B cell (primary cell): ENCODE measurements at regions of chr3 and their contacts with region 1.

Region 1: DNA sequence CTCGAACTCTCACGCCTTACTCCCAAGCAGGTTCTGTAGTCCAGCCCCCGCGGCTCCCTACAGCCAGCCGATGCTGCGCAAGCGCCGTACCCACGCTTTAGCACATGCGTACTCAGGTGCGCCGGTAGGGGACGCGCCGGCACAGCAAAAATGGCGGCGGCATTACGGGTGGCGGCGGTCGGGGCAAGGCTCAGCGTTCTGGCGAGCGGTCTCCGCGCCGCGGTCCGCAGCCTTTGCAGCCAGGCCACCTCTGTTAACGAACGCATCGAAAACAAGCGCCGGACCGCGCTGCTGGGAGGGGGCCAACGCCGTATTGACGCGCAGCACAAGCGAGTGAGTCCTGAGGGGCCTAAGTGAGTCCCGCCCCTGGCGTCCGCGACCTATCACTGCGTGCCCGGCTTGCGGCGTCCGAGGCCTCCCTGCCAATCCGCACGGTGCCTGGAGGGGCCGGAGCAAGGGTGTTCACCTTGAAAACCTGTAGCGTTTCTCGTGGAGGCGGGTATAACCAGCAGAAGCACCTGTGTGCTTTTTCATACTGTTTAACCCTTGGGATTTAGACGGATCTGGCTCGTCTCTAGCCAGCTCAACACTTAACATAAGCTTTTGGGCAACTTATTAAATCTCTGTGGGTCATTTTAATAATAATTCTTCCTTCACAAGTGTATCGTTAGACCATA is at the start of gene PCCB:
- DNase-seq: peak; percentile 98
- ATAC-seq: peak; percentile 96
- H3K4me3 ChIP-seq: peak within 1 kb of the TSS; percentile 59 to 76 (median 73)
- H3K4me3 Mint-ChIP-seq: peak within 1 kb of the TSS; percentile 92
- H3K27ac ChIP-seq: peak within 1 kb of the TSS; percentile 72 to 83
- H3K27ac Mint-ChIP-seq: peak within 1 kb of the TSS; percentile 92
- H3K4me1 ChIP-seq: peaks cover 10 to 17% of the 10 kb centered on the region in 2 donors
- H3K4me1 Mint-ChIP-seq: peaks cover 20% of the 10 kb centered on the region
- H3K27me3 ChIP-seq: no peaks in the 10 kb centered on the region
- H3K27me3 Mint-ChIP-seq: no peaks in the 10 kb centered on the region
- CTCF ChIP-seq: peak; percentile 82
- total RNA-seq, gene PCCB: 12.5 and 15.5 TPM in 2 replicates

Region 2: DNA sequence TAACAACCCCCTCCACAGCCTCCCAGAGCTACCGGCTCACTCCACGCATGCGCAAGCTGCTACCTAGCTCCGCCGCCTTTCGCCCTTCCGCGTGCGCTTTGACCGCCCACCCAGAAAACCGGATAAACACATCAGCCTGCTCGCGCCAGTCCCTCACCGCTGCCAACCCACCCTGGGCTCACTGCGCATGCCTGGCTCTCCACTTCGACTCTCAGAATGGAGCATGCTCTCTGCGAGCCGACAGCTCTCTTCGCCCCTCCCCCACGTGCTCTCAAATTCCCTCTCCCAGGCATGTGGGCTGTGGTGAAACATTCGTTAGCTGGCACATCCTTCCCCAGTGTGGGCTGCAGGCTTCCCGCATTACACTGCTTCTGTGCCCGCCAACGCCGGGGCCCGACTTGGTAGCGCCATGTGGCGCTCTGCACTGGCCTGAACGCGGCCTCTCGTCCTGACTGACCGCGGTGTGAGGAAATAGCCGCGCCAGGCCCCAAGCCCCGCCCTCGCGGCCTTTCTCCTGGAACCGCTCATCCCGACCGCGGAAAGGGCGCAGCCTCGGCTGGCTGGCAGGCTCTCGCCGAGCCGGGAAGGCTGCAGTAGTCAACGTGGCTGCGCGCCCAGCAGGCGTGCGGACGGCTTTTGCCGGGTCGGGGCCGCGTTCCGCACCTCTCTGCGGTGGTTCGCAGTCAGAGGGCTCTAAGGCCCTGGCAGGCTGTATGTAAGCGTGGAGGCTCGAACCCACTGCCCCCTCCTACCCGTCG is 53.8 kb before region 1 on chr3:
- CTCF ChIA-PET with region 1: interaction called, 43 read pairs
- POLR2A ChIA-PET with region 1: interaction called, 16 read pairs
- intact Hi-C with region 1: loop called (anchors 1 kb)
- DNase-seq: peak; percentile 99
- ATAC-seq: peak; percentile 68
- H3K4me3 ChIP-seq: peak overlapping the region; percentile 65 to 95 (median 86)
- H3K4me3 Mint-ChIP-seq: peak overlapping the region; percentile 97
- H3K27ac ChIP-seq: peak overlapping the region; percentile 91 to 99
- H3K27ac Mint-ChIP-seq: peak overlapping the region; percentile 100
- H3K4me1 ChIP-seq: peaks cover 34 to 36% of the 10 kb centered on the region in 2 donors
- H3K4me1 Mint-ChIP-seq: peaks cover 36% of the 10 kb centered on the region
- H3K27me3 ChIP-seq: no peaks in the 10 kb centered on the region
- H3K27me3 Mint-ChIP-seq: no peaks in the 10 kb centered on the region
- CTCF ChIP-seq: no peak

Region 3: DNA sequence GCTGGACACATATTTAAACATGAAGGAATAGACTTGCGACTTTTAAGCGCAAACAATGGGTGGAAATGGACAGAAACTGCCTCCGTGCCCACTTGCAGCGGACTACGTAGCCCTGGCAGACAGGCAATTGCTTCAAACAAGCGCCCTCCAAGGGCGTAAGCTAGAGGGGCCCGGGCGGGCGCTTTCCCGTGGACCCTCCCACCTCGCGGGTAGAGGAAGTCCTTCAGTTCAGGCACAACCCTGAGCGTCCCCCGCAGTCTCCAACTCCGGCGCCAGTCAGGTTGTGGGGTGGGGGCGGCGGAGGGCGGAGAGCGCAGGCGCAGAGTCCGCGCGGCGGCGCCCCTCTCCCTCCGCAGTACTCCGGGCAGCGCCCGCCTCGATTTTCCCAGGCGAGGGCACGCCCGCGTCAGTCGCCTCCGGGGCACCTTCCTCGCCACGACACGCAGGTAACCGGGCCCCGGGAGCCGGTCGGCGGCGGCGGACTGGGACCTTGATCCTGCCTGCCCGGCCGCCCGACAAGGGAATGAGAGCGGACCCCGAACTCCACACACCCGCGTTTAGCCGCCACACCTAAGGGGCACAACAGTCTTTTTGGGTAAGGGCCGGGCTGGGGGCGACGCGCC is 568.5 kb after region 1 on chr3 and contains the start of gene SLC35G2:
- CTCF ChIA-PET with region 1: no interaction called
- POLR2A ChIA-PET with region 1: no interaction called
- intact Hi-C with region 1: loop called (anchors 1 kb)
- DNase-seq: peak; percentile 38
- ATAC-seq: peak; percentile 68
- H3K4me3 ChIP-seq: peak within 1 kb of the TSS; percentile 43 to 66 (median 58)
- H3K4me3 Mint-ChIP-seq: peak within 1 kb of the TSS; percentile 95
- H3K27ac ChIP-seq: no peak within 1 kb of the TSS
- H3K27ac Mint-ChIP-seq: peak within 1 kb of the TSS; percentile 89
- H3K4me1 ChIP-seq: peaks cover 21 to 22% of the 10 kb centered on the region in 2 donors
- H3K4me1 Mint-ChIP-seq: peaks cover 23% of the 10 kb centered on the region
- H3K27me3 ChIP-seq: peaks cover 0 to 40% (median 31%) of the 10 kb centered on the region in 4 experiments
- H3K27me3 Mint-ChIP-seq: peaks cover 30% of the 10 kb centered on the region
- CTCF ChIP-seq: no peak
- total RNA-seq, gene SLC35G2: 6.3 and 9.4 TPM in 2 replicates